ENCODE measurements at regions of chr1 and their contacts with region 1.

Region 1: DNA sequence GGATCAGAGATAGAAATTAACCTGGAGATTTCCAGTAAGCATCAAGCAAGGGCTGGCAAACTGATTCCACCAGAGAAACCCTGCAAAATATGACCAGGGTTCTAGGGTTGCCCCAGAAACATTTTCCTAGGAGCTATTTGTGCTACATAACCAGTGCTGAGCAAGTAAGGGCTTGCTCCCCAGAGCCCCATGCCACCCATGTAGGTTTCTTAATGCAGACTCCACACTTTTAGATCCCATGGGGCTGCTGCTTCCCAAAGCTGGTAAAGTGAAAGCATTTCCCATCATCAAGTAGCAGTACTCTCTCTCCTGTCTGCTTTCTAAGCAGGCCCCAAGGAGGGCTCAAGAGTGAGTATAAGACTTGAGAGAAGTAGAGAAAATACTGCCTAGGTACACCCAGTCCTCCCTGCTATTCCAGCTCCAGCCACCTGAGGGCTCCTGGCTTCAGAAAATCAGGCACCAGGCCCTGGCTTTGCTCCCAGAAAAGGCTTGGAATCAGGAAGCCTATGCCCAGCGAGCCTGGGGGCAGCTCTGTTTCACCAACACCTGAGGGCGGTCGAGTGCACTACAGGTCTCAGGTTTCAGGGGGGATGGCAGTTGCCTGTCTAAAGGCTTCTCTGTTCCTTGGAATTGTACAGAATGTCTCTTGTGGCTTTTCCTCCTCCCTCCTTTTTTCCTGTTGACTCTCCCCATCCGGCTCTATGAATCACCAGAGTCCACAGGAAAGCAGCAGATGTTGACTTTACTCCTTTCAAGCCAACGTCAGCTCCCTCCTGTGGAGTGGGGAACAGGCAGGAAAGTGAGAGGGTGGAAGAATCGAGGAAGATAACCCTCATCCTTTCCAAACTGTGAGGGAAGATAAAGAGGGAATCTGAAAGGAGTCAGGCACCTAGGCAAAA is 6.2 kb upstream of the ANKRD35 start:
- DNase-seq: peak; percentile 98 to 99
- ATAC-seq: peak; percentile 97
- H3K4me3 ChIP-seq: no peak overlapping the region
- H3K27ac ChIP-seq: peak overlapping the region; percentile 88 to 91
- H3K4me1 ChIP-seq: peaks cover 41% of the 10 kb centered on the region
- CTCF ChIP-seq: peak; percentile 98
- EP300 ChIP-seq: no peak
- POLR2A ChIP-seq: no peak
- RAD21 ChIP-seq: peak; percentile 96 to 98

Region 2: DNA sequence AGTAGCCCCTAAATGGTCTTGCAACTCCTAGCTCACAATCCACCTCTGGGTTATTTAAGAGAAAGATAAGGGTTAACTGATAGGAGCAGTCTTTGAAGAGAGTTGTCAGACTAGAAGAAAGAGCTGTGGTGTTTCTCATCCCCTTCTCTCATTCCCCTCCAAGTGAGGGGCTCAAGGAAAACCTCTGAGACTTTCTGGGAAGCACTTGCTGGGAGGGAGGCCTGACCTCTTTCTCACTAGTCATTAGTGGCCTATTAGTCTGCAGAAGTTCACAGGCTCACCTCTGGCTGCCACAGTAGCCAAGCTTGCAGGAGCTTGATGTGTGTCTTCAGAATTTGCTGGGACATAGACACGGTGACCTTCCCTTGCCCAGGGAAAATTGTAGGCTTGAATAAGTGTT is 290.2 kb before region 1 on chr1:
- CTCF ChIA-PET with region 1: no interaction called
- POLR2A ChIA-PET with region 1: no interaction called
- DNase-seq: no peak
- ATAC-seq: no peak
- H3K4me3 ChIP-seq: no peak overlapping the region
- H3K27ac ChIP-seq: no peak overlapping the region
- H3K4me1 ChIP-seq: no peaks in the 10 kb centered on the region
- CTCF ChIP-seq: no peak
- EP300 ChIP-seq: no peak
- POLR2A ChIP-seq: no peak
- RAD21 ChIP-seq: no peak

Region 3: DNA sequence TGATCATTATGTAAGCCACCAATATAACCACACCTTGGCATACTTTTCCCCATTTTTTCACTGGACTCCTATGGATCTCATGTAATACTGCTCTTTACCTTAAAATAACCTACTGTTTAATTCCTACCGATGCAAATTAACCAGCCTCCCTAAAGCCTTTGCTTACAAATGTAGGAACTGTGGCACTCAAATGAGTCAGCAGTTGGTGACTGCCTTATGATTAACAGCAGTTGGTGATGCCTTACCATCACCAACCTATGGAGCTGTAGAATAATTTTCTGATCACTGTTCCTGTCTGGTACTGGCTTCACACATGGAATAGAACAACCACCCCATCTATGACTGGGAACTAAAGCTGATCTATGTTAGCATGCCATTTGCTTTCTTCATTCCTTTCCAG is 54.2 kb before region 1 on chr1:
- CTCF ChIA-PET with region 1: no interaction called
- POLR2A ChIA-PET with region 1: no interaction called
- DNase-seq: no peak
- ATAC-seq: no peak
- H3K4me3 ChIP-seq: no peak overlapping the region
- H3K27ac ChIP-seq: no peak overlapping the region
- H3K4me1 ChIP-seq: no peaks in the 10 kb centered on the region
- CTCF ChIP-seq: no peak
- EP300 ChIP-seq: no peak
- POLR2A ChIP-seq: no peak
- RAD21 ChIP-seq: no peak

Region 4: GRCh38 chr1:145858894-145859490 is 32.8 kb before region 1 on chr1 and contains the start of gene PIAS3:
- CTCF ChIA-PET with region 1: interaction called, 23 read pairs
- POLR2A ChIA-PET with region 1: interaction called, 22 read pairs
- DNase-seq: peak; percentile 92 to 93
- ATAC-seq: peak; percentile 83 to 95
- H3K4me3 ChIP-seq: peak within 1 kb of the TSS; percentile 53
- H3K27ac ChIP-seq: peak within 1 kb of the TSS; percentile 92 to 99
- H3K4me1 ChIP-seq: peaks cover 10% of the 10 kb centered on the region; the same call in 2 of the 3 replicates
- CTCF ChIP-seq: no peak
- EP300 ChIP-seq: peak in 1 of 2 experiments; percentile 7; a peak in 1 of 5 replicates
- POLR2A ChIP-seq: peak; percentile 43
- RAD21 ChIP-seq: no peak
- polyA plus RNA-seq, gene PIAS3: 15.5 and 25.4 TPM in 2 replicates

Region 5: DNA sequence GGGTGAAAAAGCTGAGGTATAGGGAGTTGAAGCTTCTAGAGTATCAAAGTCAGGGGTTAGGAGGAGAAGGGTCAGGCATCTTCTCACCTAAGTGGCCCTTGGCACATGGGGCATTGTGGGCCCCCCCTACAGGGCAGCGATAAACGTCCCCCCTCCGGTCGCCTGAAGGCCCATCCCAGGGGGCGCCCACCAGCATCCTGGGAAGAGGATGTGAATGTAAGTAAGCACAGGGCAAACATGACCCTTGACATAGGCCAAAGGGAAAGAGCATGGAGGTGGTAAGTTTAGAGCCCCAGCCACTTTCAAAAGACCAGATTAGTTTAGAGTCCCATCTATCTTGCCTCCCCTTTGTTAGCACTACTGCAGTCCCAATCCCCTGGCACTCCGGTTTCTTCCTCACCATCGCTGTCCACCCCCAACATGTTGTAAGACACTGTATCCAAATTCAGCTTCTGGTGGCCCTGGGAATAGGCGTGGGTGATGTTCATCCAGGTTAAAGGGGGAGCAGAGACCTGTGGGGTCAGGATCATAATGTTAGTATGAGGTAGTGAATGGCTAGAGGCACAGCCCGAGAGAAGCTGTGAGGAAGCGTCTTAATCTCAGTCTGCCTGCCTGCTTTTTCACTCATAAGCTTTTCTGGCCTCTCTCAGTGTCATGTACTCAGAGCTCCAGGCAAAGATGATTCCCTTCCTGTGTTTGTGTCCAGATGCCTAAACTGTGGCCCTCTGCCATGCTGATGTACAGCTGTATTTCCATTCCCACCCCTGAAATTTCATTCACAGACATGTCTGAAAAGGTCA is 15.3 kb after region 1 on chr1:
- CTCF ChIA-PET with region 1: interaction called, 429 read pairs
- POLR2A ChIA-PET with region 1: interaction called, 5 read pairs
- DNase-seq: no peak
- ATAC-seq: no peak
- H3K4me3 ChIP-seq: no peak overlapping the region
- H3K27ac ChIP-seq: peak overlapping the region; percentile 39 to 42; a peak in 4 of 6 replicates
- H3K4me1 ChIP-seq: peaks cover 4% of the 10 kb centered on the region; the same call in 1 of the 3 replicates
- CTCF ChIP-seq: no peak
- EP300 ChIP-seq: no peak
- POLR2A ChIP-seq: no peak
- RAD21 ChIP-seq: no peak

Region 6: GRCh38 chr1:145951526-145951925 is 59.7 kb after region 1 on chr1:
- CTCF ChIA-PET with region 1: interaction called, 11 read pairs
- POLR2A ChIA-PET with region 1: no interaction called
- DNase-seq: no peak
- ATAC-seq: no peak
- H3K4me3 ChIP-seq: no peak overlapping the region
- H3K27ac ChIP-seq: no peak overlapping the region
- H3K4me1 ChIP-seq: peaks cover 11% of the 10 kb centered on the region
- CTCF ChIP-seq: no peak
- EP300 ChIP-seq: no peak
- POLR2A ChIP-seq: no peak
- RAD21 ChIP-seq: no peak

Region 7: GRCh38 chr1:145978854-145979759 is 87.3 kb after region 1 on chr1:
- CTCF ChIA-PET with region 1: interaction called, 12 read pairs
- POLR2A ChIA-PET with region 1: no interaction called
- DNase-seq: peak in 1 of 2 experiments; percentile 82
- ATAC-seq: peak; percentile 58 to 75; a peak in 5 of 6 replicates
- H3K4me3 ChIP-seq: no peak overlapping the region
- H3K27ac ChIP-seq: peak overlapping the region; percentile 25 to 33; a peak in 4 of 6 replicates
- H3K4me1 ChIP-seq: peaks cover 10% of the 10 kb centered on the region; the same call in 2 of the 3 replicates
- CTCF ChIP-seq: no peak
- EP300 ChIP-seq: no peak
- POLR2A ChIP-seq: no peak
- RAD21 ChIP-seq: no peak